Activated CD8-positive, alpha-beta T cell treated with anti-CD3 and anti-CD28 coated beads for 36 hours (primary cell): ENCODE measurements at regions of chr1 and their contacts with region 1.

Region 1: GRCh38 chr1:229685149-229685548 is 59.1 kb downstream of the URB2 start:
- DNase-seq: no peak
- ATAC-seq: no peak
- H3K4me3 Mint-ChIP-seq: no peak overlapping the region
- H3K27ac Mint-ChIP-seq: no peak overlapping the region
- H3K4me1 Mint-ChIP-seq: no peaks in the 10 kb centered on the region
- H3K27me3 Mint-ChIP-seq: no peaks in the 10 kb centered on the region
- CTCF ChIP-seq: no peak

Region 2: GRCh38 chr1:229310833-229311232 is 374.3 kb before region 1 on chr1:
- CTCF ChIA-PET with region 1: no interaction called
- POLR2A ChIA-PET with region 1: no interaction called
- intact Hi-C with region 1: no loop called
- DNase-seq: no peak
- ATAC-seq: no peak
- H3K4me3 Mint-ChIP-seq: no peak overlapping the region
- H3K27ac Mint-ChIP-seq: no peak overlapping the region
- H3K4me1 Mint-ChIP-seq: no peaks in the 10 kb centered on the region
- H3K27me3 Mint-ChIP-seq: no peaks in the 10 kb centered on the region
- CTCF ChIP-seq: no peak

Region 3: DNA sequence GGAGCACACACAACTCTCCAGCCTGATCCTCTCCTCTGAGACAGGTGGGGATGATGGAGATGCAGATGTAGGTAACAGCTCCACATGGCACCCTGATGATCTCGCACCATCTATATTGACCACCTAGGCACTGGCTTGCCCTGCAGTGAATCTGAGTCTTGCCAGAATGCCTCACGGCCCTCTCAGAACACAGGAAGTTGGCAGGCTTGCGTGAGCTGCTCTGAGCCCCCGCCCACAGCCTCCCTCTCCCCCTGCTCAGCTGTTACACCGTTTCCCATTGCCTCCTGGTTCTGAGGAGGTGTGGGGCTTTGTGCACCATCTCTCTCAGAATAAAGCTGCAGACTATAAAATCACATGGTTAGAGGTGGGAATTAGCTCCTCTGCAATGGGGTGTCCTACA is 11.1 kb before region 1 on chr1:
- CTCF ChIA-PET with region 1: interaction called, 12 read pairs
- POLR2A ChIA-PET with region 1: no interaction called
- intact Hi-C with region 1: no loop called
- DNase-seq: peak; percentile 53
- ATAC-seq: peak; percentile 69
- H3K4me3 Mint-ChIP-seq: no peak overlapping the region
- H3K27ac Mint-ChIP-seq: no peak overlapping the region
- H3K4me1 Mint-ChIP-seq: peaks cover 17% of the 10 kb centered on the region
- H3K27me3 Mint-ChIP-seq: no peaks in the 10 kb centered on the region
- CTCF ChIP-seq: no peak

Region 4: GRCh38 chr1:229699613-229700267 is 14.6 kb after region 1 on chr1:
- CTCF ChIA-PET with region 1: no interaction called
- POLR2A ChIA-PET with region 1: no interaction called
- intact Hi-C with region 1: no loop called
- DNase-seq: no peak
- ATAC-seq: no peak
- H3K4me3 Mint-ChIP-seq: no peak overlapping the region
- H3K27ac Mint-ChIP-seq: no peak overlapping the region
- H3K4me1 Mint-ChIP-seq: peaks cover 2% of the 10 kb centered on the region
- H3K27me3 Mint-ChIP-seq: no peaks in the 10 kb centered on the region
- CTCF ChIP-seq: no peak

Region 5: DNA sequence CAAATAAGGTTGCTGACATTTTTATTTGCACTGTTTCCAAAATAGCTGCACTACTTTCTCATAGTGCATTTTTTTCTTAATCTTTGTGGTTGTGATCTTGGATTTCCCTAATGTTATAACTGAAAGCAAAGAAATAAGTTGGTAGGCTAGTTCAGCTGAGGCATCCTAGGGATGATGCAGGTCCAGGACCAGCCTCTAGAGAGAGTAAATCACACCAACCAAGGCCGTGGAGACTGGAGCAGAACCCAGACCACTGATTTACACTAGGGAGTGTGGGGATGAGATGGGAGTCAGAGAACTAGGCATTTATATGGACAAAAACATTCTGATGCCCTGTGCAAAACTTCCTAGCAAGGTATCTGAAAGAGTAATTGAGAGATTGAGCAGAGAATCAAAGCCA is 45.4 kb after region 1 on chr1:
- CTCF ChIA-PET with region 1: no interaction called
- POLR2A ChIA-PET with region 1: no interaction called
- intact Hi-C with region 1: no loop called
- DNase-seq: no peak
- ATAC-seq: no peak
- H3K4me3 Mint-ChIP-seq: no peak overlapping the region
- H3K27ac Mint-ChIP-seq: no peak overlapping the region
- H3K4me1 Mint-ChIP-seq: no peaks in the 10 kb centered on the region
- H3K27me3 Mint-ChIP-seq: no peaks in the 10 kb centered on the region
- CTCF ChIP-seq: no peak